A549 (cell line): ENCODE measurements at regions of chr20 and their contacts with region 1.

Region 1: GRCh38 chr20:5448449-5449118 is 131.8 kb upstream of the PROKR2 start:
- DNase-seq: peak; percentile 61 to 70
- ATAC-seq: peak; percentile 81 to 92
- H3K4me3 ChIP-seq: no peak overlapping the region
- H3K27ac ChIP-seq: no peak overlapping the region
- H3K4me1 ChIP-seq: no peaks in the 10 kb centered on the region
- CTCF ChIP-seq: peak; percentile 86
- EP300 ChIP-seq: no peak
- POLR2A ChIP-seq: no peak
- RAD21 ChIP-seq: peak; percentile 75 to 80

Region 2: DNA sequence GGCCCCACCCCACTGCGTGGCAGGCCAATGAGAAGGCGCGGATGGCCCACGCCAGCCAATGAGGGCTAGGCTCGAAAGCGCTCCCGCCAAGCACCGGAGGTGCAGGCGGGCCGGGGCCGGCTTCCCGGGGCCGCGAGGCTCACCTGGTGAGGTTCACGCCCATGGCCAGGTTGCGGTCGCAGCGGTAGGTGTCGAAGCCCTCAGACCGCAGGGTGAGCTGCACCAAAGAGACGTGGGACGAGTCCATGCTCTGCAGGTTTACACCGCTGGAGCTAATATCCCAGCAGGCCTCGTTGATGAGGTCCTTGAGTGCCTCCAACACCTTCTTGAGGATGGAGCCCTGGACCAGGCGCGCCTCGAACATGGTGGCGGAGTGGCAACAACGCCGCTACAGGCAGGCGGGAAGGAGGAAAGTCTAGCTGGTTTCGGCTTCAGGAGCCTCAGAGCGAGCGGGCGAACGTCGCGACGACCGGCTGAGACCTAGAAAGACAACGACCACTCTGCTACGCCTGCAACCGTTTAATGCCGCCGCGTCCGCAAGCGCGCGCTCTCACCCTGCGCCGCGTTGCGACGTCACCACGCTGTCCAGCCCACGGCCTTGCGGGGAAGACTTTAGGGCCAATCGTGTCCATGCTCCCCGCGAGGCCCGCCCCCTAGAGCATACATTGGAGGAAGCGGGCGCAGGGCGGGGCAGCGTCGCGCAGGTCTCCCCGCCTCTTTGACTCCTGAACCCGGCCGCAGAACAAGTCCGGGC is 329.0 kb before region 1 on chr20 and contains the start of gene PCNA:
- CTCF ChIA-PET with region 1: no interaction called
- POLR2A ChIA-PET with region 1: no interaction called
- DNase-seq: peak; percentile 99
- ATAC-seq: peak; percentile 96 to 97
- H3K4me3 ChIP-seq: peak within 1 kb of the TSS; percentile 78
- H3K27ac ChIP-seq: peak within 1 kb of the TSS; percentile 85 to 90
- H3K4me1 ChIP-seq: peaks cover 31% of the 10 kb centered on the region
- CTCF ChIP-seq: no peak; the same call in 2 of the 3 replicates
- EP300 ChIP-seq: no peak
- POLR2A ChIP-seq: peak; percentile 99
- RAD21 ChIP-seq: no peak
- polyA plus RNA-seq, gene PCNA: 388 and 450 TPM in 2 replicates

Region 3: GRCh38 chr20:5197847-5198650 is 250.5 kb before region 1 on chr20:
- CTCF ChIA-PET with region 1: interaction called, 204 read pairs
- POLR2A ChIA-PET with region 1: no interaction called
- DNase-seq: no peak
- ATAC-seq: 0 out of 6 replicates have a peak, but pooled peaks of 1 of the 2 experiments have one; percentile 35
- H3K4me3 ChIP-seq: no peak overlapping the region
- H3K27ac ChIP-seq: no peak overlapping the region
- H3K4me1 ChIP-seq: no peaks in the 10 kb centered on the region
- CTCF ChIP-seq: no peak
- EP300 ChIP-seq: no peak
- POLR2A ChIP-seq: no peak
- RAD21 ChIP-seq: no peak

Region 4: DNA sequence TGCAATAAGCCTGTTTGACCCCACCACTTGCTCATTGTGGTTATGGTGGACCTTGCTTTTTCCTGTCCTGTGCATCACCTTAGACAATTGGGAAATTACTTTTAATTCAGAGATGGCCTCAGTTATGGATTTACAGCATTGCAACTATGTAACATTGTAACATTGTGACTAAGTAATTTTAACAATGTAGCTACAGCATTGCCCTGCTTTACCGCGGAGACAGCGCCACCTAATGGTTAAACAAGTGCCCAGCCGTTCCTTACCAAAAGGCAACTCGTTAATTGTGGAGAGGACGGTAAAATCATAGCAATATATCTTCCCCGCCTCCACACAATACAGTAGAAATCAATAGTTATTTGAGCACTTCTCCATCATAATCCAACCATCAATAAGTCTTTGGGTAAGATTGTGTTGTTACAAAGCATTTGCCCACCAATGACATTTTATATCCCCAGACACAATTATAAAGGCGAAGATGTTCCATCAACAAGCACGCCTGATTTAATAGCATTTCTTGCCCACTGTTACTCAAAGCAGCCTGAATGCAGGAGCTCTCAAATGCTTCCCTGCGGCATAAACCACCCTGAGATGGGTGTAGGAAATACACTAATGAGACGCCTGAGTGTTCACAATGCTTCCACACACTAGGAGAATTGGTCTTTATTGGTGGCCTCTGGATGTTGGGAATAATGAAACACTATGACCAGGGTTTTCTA is 225.5 kb before region 1 on chr20:
- CTCF ChIA-PET with region 1: interaction called, 24 read pairs
- POLR2A ChIA-PET with region 1: no interaction called
- DNase-seq: peak; percentile 63 to 71
- ATAC-seq: peak; percentile 76 to 88; a peak in 4 of 6 replicates
- H3K4me3 ChIP-seq: no peak overlapping the region
- H3K27ac ChIP-seq: no peak overlapping the region
- H3K4me1 ChIP-seq: 0 out of 3 replicates have a peak, but pooled peaks cover 3% of the 10 kb centered on the region
- CTCF ChIP-seq: peak; percentile 92
- EP300 ChIP-seq: no peak
- POLR2A ChIP-seq: no peak
- RAD21 ChIP-seq: peak; percentile 61 to 83

Region 5: DNA sequence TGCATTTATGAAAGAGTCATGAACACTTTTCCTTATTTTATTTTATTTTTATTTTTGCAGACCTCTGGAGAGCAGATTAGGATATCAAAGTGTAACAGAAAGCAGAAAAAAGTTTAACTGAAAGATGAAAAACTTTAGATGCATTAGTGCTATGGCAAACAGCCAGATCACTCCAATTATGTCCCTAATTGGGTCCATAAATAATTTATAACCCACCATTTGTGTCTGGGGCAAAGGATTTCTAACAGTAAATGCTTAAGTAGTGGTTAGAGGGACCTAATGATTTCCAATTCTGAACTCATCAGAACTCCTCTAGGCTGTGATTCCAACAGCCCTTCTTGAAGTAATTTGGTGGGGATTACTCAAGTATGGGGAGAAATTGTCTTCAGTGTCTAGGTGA is 38.1 kb before region 1 on chr20:
- CTCF ChIA-PET with region 1: interaction called, 17 read pairs
- POLR2A ChIA-PET with region 1: no interaction called
- DNase-seq: no peak
- ATAC-seq: no peak
- H3K4me3 ChIP-seq: no peak overlapping the region
- H3K27ac ChIP-seq: no peak overlapping the region
- H3K4me1 ChIP-seq: no peaks in the 10 kb centered on the region
- CTCF ChIP-seq: no peak
- EP300 ChIP-seq: no peak
- POLR2A ChIP-seq: no peak
- RAD21 ChIP-seq: no peak

Region 6: GRCh38 chr20:5463007-5463686 is 14.6 kb after region 1 on chr20:
- CTCF ChIA-PET with region 1: interaction called, 25 read pairs
- POLR2A ChIA-PET with region 1: no interaction called
- DNase-seq: no peak
- ATAC-seq: no peak
- H3K4me3 ChIP-seq: no peak overlapping the region
- H3K27ac ChIP-seq: no peak overlapping the region
- H3K4me1 ChIP-seq: no peaks in the 10 kb centered on the region
- CTCF ChIP-seq: no peak
- EP300 ChIP-seq: no peak
- POLR2A ChIP-seq: no peak
- RAD21 ChIP-seq: no peak